Caco-2 (cell line): ENCODE measurements at regions of chr2 and their contacts with region 1.

Region 1: DNA sequence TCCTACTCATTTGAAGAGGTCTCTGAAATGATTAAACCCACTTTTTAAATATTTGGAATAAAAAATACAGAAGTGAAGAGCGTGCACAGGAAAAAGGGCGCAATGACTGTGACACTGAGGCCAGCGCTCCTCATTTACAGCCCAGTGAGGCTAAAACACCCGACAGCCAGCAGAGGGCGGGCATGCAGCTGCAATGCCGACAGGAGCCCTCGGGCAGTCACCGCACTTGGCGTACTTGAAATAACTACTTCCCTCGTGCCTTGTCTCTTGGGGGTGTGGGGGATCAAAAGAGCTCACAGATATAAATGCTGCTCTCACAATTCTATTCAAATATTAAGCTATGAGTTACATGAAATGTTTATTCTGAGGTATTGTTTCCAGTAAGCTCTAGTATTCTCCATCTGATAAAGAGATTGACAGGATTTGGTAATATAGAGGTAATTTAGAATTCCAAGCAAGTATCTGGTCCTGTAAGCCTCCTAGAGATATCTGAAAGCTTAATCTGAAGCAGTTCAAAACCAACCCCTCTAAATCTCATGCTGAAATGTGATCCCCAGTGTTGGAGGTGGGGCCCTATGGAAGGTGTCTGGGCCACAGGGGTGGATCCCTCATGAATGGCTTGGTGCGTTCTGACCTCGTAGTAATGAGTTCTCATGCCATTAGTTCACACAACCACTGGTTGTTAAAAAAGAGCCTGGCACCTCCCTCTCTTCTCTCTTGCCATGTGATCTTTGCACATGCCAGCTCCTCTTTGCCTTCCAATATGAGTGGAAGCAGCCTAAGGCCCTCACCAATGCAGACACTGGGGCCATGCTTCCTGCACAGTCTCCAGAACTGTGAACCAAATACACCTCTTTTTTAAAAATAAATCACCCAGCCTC is 93.6 kb downstream of the ZAP70 start:
- DNase-seq: peak; percentile 76 to 80
- H3K4me3 ChIP-seq: no peak overlapping the region
- H3K4me3 Mint-ChIP-seq: no peak overlapping the region
- H3K27ac Mint-ChIP-seq: no peak overlapping the region
- H3K4me1 ChIP-seq: no peaks in the 10 kb centered on the region
- H3K4me1 Mint-ChIP-seq: no peaks in the 10 kb centered on the region
- H3K27me3 ChIP-seq: no peaks in the 10 kb centered on the region
- H3K27me3 Mint-ChIP-seq: no peaks in the 10 kb centered on the region
- CTCF ChIP-seq: peak; percentile 93 to 96

Region 2: DNA sequence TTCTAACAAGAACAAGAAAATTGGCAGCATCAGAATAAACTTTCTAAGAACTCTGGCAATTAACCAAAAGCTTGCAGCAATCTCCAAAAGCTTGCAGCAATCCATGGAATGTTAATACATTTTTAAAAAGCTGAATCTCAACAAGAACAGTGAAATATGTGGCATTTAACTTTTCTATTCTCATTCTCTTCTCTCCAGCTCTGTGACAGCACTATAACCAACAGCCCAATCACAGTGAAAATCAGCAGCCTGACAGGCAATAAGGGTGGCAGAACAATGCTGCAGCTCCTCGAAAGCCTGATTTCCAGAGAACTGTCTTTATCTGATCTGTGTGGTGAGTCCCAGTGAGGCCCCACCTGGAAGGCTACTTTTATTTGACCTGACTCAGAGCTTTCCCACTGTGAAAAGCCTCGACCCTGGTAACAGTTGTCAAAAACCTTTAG is 128.8 kb after region 1 on chr2:
- CTCF ChIA-PET with region 1: interaction called, 3 read pairs
- POLR2A ChIA-PET with region 1: no interaction called
- intact Hi-C with region 1: loop called (anchors 5 kb)
- DNase-seq: peak; percentile 42 to 45
- H3K4me3 ChIP-seq: no peak overlapping the region
- H3K4me3 Mint-ChIP-seq: peak overlapping the region; percentile 62
- H3K27ac Mint-ChIP-seq: peak overlapping the region; percentile 62
- H3K4me1 ChIP-seq: 0 out of 2 replicates have a peak, but pooled peaks cover 16% of the 10 kb centered on the region
- H3K4me1 Mint-ChIP-seq: peaks cover 7% of the 10 kb centered on the region
- H3K27me3 ChIP-seq: no peaks in the 10 kb centered on the region
- H3K27me3 Mint-ChIP-seq: no peaks in the 10 kb centered on the region
- CTCF ChIP-seq: no peak

Region 3: GRCh38 chr2:97995734-97996624 is 189.0 kb after region 1 on chr2 and contains the start of gene TMEM131:
- CTCF ChIA-PET with region 1: no interaction called
- POLR2A ChIA-PET with region 1: no interaction called
- intact Hi-C with region 1: loop called (anchors 2 kb)
- DNase-seq: peak; percentile 95 to 97
- H3K4me3 ChIP-seq: peak within 1 kb of the TSS; percentile 98
- H3K4me3 Mint-ChIP-seq: peak within 1 kb of the TSS; percentile 92
- H3K27ac Mint-ChIP-seq: peak within 1 kb of the TSS; percentile 75
- H3K4me1 ChIP-seq: peaks cover 20% of the 10 kb centered on the region
- H3K4me1 Mint-ChIP-seq: peaks cover 14% of the 10 kb centered on the region
- H3K27me3 ChIP-seq: no peaks in the 10 kb centered on the region
- H3K27me3 Mint-ChIP-seq: peaks cover 3% of the 10 kb centered on the region
- CTCF ChIP-seq: no peak
- total RNA-seq, gene TMEM131: 35.8 and 36.3 TPM in 2 replicates

Region 4: DNA sequence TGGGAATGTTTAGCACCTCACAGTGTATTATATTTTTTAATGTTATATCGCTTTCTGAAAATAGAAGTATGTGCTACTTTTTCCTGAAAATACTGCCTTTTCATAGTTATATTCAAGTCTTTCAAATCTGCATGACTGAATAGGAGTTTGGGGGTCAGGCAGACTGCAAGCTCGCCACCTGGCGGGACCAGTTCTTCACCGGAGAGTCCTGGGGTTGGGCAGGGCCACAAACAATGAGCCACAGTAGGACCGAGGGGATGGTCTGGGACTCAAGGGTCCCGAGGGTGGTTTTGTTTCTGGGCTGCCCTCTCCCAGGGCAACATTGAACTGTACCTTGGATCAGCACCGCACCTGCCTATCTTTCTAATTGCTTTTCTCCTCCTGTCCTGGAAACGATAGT is 350.6 kb after region 1 on chr2:
- CTCF ChIA-PET with region 1: no interaction called
- POLR2A ChIA-PET with region 1: no interaction called
- intact Hi-C with region 1: loop called (anchors 1 kb)
- DNase-seq: peak in 1 of 2 experiments; percentile 46
- H3K4me3 ChIP-seq: no peak overlapping the region
- H3K4me3 Mint-ChIP-seq: no peak overlapping the region
- H3K27ac Mint-ChIP-seq: no peak overlapping the region
- H3K4me1 ChIP-seq: no peaks in the 10 kb centered on the region
- H3K4me1 Mint-ChIP-seq: no peaks in the 10 kb centered on the region
- H3K27me3 ChIP-seq: no peaks in the 10 kb centered on the region; the same call in 1 of the 2 replicates
- H3K27me3 Mint-ChIP-seq: no peaks in the 10 kb centered on the region
- CTCF ChIP-seq: peak; percentile 34 to 54

Region 5: DNA sequence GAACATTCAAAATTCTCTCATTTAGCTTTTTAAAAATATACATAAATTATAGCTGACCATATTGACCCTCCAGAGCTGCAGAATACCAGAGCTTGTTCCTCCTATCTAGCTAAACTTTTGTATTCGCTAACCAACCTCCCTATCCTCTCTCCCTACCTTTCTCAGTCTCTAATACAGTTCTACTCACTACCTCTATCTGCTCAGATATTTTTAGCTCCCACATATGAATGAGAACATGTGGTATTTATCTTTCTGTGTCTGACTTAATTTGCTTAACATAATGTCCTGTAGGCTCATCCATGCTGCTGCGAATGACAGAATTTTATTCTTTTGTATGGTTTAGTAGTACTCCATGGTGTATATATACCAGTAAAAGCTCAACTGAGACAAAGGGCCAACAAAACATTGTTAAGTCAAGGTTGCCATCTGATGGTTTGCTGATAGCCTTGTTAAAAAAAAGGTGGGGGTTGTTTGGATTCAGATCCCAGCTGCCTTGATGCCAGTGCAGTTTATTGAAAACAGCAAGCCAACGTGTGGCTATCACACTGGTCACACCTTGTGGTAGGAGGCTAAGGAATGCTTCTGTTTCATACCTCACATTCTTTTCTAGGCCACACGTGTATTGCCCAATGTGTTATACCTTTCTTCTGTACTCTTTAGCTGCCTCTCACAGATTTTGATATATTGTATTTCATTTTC is 381.5 kb after region 1 on chr2:
- CTCF ChIA-PET with region 1: interaction called, 5 read pairs
- POLR2A ChIA-PET with region 1: no interaction called
- intact Hi-C with region 1: loop called (anchors 2 kb)
- DNase-seq: peak; percentile 54 to 64
- H3K4me3 ChIP-seq: no peak overlapping the region
- H3K4me3 Mint-ChIP-seq: no peak overlapping the region
- H3K27ac Mint-ChIP-seq: no peak overlapping the region
- H3K4me1 ChIP-seq: peaks cover 12% of the 10 kb centered on the region
- H3K4me1 Mint-ChIP-seq: no peaks in the 10 kb centered on the region
- H3K27me3 ChIP-seq: no peaks in the 10 kb centered on the region
- H3K27me3 Mint-ChIP-seq: no peaks in the 10 kb centered on the region
- CTCF ChIP-seq: no peak

Region 6: DNA sequence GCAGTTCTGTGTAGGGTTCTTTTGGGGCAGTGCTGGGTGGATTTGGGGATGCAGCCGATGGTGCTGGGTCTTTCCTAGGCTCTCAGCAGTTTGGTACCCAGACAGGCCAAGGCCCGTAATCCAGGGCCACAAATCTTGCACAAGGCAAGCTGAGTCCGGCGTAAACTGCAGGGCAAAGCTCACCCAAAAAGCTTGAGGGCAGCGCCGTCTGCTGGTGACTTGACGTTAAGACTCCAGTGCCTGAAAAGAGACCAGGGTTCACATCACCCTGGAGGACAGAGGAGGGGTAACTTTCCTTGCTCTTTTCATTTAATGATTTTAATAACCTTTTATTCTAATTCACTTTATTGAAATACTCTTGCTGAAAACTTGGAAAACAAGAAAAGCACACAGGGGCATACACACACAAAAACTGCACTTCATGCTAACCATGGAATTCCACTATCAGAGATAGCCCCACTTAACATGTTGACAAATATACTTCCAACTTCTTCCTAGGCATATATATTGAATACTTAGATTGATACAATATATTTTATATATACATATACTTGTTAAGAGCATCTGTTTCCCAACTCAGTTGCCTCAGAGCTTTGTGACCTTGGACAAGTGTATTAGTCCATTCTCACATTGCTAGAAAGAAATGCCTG is 578.2 kb after region 1 on chr2:
- CTCF ChIA-PET with region 1: interaction called, 5 read pairs
- POLR2A ChIA-PET with region 1: no interaction called
- intact Hi-C with region 1: loop called (anchors 1 kb)
- DNase-seq: peak; percentile 71 to 84
- H3K4me3 ChIP-seq: no peak overlapping the region
- H3K4me3 Mint-ChIP-seq: no peak overlapping the region
- H3K27ac Mint-ChIP-seq: no peak overlapping the region
- H3K4me1 ChIP-seq: no peaks in the 10 kb centered on the region
- H3K4me1 Mint-ChIP-seq: no peaks in the 10 kb centered on the region
- H3K27me3 ChIP-seq: no peaks in the 10 kb centered on the region; the same call in 1 of the 2 replicates
- H3K27me3 Mint-ChIP-seq: peaks cover 5% of the 10 kb centered on the region
- CTCF ChIP-seq: peak; percentile 93 to 97